Body of pancreas (tissue), 4 donors: ENCODE measurements at regions of chr4 and their contacts with region 1.

Region 1: DNA sequence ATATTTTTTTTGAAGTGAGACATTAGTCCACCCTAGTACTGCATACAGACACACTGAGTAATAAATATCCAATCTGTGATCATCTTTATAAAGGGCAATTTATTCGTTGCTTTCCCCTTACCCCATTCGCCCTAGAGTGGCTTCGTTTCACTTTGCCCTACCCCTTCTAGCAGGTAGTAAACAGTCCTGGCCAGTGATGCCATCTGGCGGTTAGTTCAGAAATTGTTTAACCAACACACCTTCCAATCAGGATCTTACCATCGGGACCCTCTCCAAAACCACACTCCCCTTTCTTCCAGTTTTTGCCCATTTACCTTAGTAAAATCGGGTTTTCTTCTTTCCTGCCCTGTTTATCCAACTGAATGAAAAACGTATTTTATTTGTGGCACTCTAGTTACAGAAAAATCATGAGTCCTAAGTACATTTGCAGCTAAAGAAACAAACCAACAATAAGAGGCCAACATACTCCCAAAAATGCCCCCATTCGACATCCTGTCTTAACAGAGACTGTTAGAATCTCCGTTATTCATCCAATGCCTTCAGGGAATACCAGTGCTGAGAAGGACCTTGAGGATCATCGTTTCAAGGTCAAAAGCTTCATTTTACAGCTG is 2.2 kb downstream of the PPA2 start:
- DNase-seq: peak; percentile 71 to 81 (median 74)
- ATAC-seq: peak; percentile 24
- H3K4me3 ChIP-seq: no peak overlapping the region
- H3K27ac ChIP-seq: peak overlapping the region in 3 of 4 donors; percentile 98 to 99 (median 98)
- H3K4me1 ChIP-seq: peaks cover 41% of the 10 kb centered on the region
- H3K27me3 ChIP-seq: no peaks in the 10 kb centered on the region
- CTCF ChIP-seq: peak; percentile 48 to 85 (median 75)
- POLR2A ChIP-seq: no peak

Region 2: DNA sequence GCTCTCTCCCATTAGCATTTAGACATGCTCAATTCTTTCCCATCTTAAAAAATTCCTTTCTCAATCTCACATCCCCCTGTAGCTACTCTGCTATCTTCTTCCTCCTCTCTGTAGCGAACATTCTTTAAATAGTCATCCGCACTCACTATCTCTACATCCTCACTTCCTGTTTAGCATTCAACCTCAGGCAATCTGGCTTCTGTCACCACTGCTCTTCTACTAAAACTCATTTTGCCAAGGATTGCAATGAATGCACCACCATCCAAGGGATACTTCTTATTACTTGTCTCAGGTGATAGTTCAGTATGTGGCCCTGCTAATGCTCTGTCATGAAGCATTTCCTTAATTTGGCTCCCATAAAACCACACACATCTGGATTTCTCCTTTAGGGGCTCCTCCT is 335.9 kb before region 1 on chr4:
- intact Hi-C with region 1: loop called (anchors 5 kb)
- DNase-seq: no peak
- ATAC-seq: no peak
- H3K4me3 ChIP-seq: no peak overlapping the region
- H3K27ac ChIP-seq: no peak overlapping the region
- H3K4me1 ChIP-seq: no peaks in the 10 kb centered on the region
- H3K27me3 ChIP-seq: no peaks in the 10 kb centered on the region
- CTCF ChIP-seq: no peak
- POLR2A ChIP-seq: no peak